ENCODE measurements at regions of chr4 and their contacts with region 1.

Region 1: DNA sequence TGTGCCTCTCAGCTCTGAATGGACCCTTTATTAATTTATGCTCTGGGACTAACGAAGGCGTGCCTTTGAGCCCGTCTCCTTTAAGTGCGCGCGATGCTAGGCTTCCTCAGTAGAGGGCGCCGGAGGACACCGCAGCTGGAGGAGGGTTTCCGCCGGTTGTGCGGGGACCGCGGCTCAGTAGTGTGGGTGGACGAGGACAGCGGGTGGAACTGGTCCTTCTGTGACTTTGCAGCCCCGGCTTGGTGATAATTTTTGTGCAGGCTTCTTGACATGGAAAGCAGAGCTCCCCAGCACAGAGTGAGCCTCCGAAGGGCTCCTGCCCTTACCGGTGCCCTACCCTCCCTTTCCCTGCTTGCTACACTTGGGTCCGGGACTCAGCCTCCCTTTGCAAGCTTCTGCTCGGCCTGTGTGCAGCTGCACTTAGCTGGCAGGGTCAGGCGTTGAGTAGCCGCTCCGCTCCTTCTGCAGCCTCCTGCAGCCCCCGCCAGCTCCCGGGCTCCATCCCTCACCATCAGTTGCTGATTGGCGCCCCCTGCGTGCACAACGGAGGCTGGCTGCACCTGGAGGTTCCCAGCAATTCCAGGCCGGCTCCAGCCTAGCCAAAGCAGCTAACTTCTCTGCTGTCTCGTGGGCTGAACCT is 26.8 kb upstream of the BOD1L1 start:
- DNase-seq: peak; percentile 40 to 83 (median 68)
- ATAC-seq: peak; percentile 92 to 96 (median 94)
- H3K4me3 ChIP-seq: peak overlapping the region; percentile 63 to 65
- H3K4me3 Mint-ChIP-seq: peak overlapping the region; percentile 79 to 84 (median 81)
- H3K27ac ChIP-seq: no peak overlapping the region
- H3K27ac Mint-ChIP-seq: peak overlapping the region in 1 of 2 donors; percentile 34
- H3K4me1 ChIP-seq: peaks cover 0 to 8% of the 10 kb centered on the region in 2 experiments
- H3K4me1 Mint-ChIP-seq: peaks cover 16 to 20% (median 16%) of the 10 kb centered on the region in 3 donors
- H3K27me3 ChIP-seq: peaks cover 0 to 3% of the 10 kb centered on the region in 2 experiments
- H3K27me3 Mint-ChIP-seq: peaks cover 10 to 12% of the 10 kb centered on the region in 2 donors

Region 2: GRCh38 chr4:13627606-13628301 is 26.5 kb before region 1 on chr4 and contains the start of gene BOD1L1:
- CTCF ChIA-PET with region 1: interaction called, 13 to 14 read pairs
- POLR2A ChIA-PET with region 1: no interaction called
- DNase-seq: peak; percentile 36 to 89 (median 61)
- ATAC-seq: peak; percentile 81 to 85 (median 84)
- H3K4me3 ChIP-seq: peak within 1 kb of the TSS; percentile 65 to 88
- H3K4me3 Mint-ChIP-seq: peak within 1 kb of the TSS; percentile 87 to 99 (median 91)
- H3K27ac ChIP-seq: peak within 1 kb of the TSS; percentile 79
- H3K27ac Mint-ChIP-seq: peak within 1 kb of the TSS; percentile 98
- H3K4me1 ChIP-seq: peaks cover 14 to 20% of the 10 kb centered on the region in 2 experiments
- H3K4me1 Mint-ChIP-seq: peaks cover 49 to 54% (median 51%) of the 10 kb centered on the region in 3 donors
- H3K27me3 ChIP-seq: no peaks in the 10 kb centered on the region
- H3K27me3 Mint-ChIP-seq: no peaks in the 10 kb centered on the region
- total RNA-seq, gene BOD1L1: 48.3 to 57.1 (median 55.4) TPM

Measured in T-cell (primary cell).